HEK293 (cell line): ENCODE measurements at regions of chr20 and their contacts with region 1.

Region 1: GRCh38 chr20:52242237-52243230 is 51.0 kb upstream of the ZFP64 start:
- H3K4me3 ChIP-seq: no peak overlapping the region
- H3K27ac ChIP-seq: no peak overlapping the region
- H3K4me1 ChIP-seq: no peaks in the 10 kb centered on the region
- CTCF ChIP-seq: no peak

Region 2: DNA sequence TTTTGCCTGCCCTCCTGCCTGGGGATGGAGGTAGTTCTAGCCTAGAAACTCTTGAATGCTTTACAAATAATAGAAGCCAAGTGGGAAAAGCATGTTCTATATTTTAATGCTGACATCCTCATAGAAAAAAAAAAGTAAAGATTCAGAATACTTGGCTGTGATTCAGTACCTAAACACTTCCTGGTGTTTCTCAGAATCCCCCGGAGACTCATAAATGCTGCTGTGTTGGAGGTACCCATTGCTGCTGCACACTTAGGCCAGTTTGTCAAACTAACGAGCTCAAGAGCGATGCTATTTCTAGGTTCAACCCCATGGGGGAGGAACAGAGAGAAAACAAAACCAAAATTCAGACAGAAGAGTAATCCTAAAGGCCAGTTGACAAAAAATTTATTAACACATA is 12.1 kb before region 1 on chr20:
- CTCF ChIA-PET with region 1: interaction called, 14 read pairs
- POLR2A ChIA-PET with region 1: no interaction called
- H3K4me3 ChIP-seq: no peak overlapping the region
- H3K27ac ChIP-seq: no peak overlapping the region
- H3K4me1 ChIP-seq: peaks cover 6% of the 10 kb centered on the region; the same call in 1 of the 2 replicates
- CTCF ChIP-seq: no peak